ENCODE measurements at regions of chr3 and their contacts with region 1.

Region 1: DNA sequence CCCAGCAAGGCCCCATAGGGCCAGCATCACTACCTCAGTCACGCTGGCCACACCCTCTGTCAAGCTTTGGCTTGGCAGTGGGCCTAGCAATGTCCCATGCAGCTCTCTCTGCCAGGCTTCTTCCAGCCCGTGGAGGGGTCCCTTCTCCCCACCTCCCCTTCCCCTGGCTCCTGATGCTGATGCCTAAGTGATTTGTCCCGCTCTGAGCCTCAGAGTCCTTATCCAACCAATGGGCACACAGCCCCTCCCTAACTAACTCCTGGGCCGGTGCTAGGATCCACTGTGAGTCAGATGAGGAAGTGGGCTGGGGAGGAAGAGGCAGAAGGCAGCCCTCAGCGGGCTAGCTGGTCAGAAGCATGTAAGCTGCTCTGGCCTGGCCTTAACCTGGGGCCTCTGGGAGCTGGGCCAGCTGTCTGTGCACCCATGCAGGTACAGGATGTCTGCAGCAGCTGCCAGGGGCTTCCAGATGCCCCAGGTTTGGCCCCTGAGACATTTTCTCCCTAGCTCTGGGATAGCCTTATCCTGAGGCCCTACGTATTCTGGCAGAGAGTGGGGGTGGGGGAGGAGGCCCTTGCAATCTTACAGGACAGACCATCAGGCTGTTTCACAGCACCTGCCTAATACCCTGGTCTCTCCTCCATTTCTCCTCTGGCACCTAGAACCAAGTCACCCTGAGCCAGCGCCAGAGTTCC is 740 bp upstream of the ZBTB47 start:
- DNase-seq: peak; percentile 56 to 73
- ATAC-seq: peak; percentile 19 to 31 (median 27)
- H3K4me3 ChIP-seq: peak overlapping the region; percentile 78
- H3K27ac ChIP-seq: peak overlapping the region; percentile 98
- H3K4me1 ChIP-seq: peaks cover 43% of the 10 kb centered on the region
- H3K27me3 ChIP-seq: no peaks in the 10 kb centered on the region
- CTCF ChIP-seq: no peak

Region 2: DNA sequence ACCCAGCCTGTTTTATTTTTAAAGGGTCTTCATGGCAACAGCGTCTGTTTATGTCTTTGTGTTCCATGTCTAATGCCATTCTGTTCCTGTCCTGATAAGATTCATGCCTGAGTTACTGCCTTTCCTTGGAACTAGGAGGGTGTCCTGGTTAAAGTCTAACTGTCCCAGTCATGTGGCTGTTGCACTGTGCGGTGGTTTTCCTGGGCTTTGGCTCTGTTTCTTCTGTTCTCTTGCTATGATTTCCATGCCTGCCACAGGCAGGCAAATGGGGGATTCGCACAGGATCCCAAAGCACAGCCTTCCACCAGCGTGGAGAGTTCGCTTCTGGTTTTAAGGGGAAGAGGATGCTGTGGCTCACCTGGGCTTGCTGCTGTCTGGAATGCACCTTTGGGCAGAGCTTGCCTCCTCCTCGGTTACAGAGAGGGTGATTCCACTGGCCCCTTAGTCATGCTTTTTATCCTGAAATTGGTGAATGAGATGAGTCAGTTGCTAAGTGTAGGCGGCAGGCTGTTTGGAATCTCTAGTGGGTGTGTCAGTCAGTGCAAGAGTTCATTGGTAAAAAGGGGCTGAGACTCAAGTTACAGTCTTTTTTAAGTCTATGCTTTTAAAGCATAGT is 473.5 kb before region 1 on chr3:
- intact Hi-C with region 1: no loop called
- DNase-seq: peak; percentile 29 to 57
- ATAC-seq: peak; percentile 94 to 98 (median 96)
- H3K4me3 ChIP-seq: peak overlapping the region; percentile 6
- H3K27ac ChIP-seq: peak overlapping the region; percentile 71
- H3K4me1 ChIP-seq: peaks cover 64% of the 10 kb centered on the region
- H3K27me3 ChIP-seq: no peaks in the 10 kb centered on the region
- CTCF ChIP-seq: no peak

Region 3: DNA sequence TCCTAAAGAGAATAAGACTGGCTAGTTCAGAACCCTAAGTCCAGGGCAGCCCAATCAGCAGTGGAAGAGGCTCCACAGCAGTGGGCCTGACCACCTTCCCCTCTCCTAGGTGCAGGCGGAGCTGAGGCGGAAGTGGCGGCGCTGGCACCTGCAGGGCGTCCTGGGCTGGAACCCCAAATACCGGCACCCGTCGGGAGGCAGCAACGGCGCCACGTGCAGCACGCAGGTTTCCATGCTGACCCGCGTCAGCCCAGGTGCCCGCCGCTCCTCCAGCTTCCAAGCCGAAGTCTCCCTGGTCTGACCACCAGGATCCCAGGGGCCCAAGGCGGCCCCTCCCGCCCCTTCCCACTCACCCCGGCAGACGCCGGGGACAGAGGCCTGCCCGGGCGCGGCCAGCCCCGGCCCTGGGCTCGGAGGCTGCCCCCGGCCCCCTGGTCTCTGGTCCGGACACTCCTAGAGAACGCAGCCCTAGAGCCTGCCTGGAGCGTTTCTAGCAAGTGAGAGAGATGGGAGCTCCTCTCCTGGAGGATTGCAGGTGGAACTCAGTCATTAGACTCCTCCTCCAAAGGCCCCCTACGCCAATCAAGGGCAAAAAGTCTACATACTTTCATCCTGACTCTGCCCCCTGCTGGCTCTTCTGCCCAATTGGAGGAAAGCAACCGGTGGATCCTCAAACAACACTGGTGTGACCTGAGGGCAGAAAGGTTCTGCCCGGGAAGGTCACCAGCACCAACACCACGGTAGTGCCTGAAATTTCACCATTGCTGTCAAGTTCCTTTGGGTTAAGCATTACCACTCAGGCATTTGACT is 116.6 kb before region 1 on chr3:
- intact Hi-C with region 1: no loop called
- DNase-seq: no peak
- ATAC-seq: peak in 1 of 4 donors; percentile 37
- H3K4me3 ChIP-seq: no peak overlapping the region
- H3K27ac ChIP-seq: no peak overlapping the region
- H3K4me1 ChIP-seq: no peaks in the 10 kb centered on the region
- H3K27me3 ChIP-seq: no peaks in the 10 kb centered on the region
- CTCF ChIP-seq: no peak

Region 4: GRCh38 chr3:42547401-42547945 is 105.3 kb before region 1 on chr3:
- intact Hi-C with region 1: no loop called
- DNase-seq: peak; percentile 60 to 81
- ATAC-seq: peak; percentile 67 to 88 (median 79)
- H3K4me3 ChIP-seq: no peak overlapping the region
- H3K27ac ChIP-seq: no peak overlapping the region
- H3K4me1 ChIP-seq: no peaks in the 10 kb centered on the region
- H3K27me3 ChIP-seq: no peaks in the 10 kb centered on the region
- CTCF ChIP-seq: peak; percentile 97

Region 5: DNA sequence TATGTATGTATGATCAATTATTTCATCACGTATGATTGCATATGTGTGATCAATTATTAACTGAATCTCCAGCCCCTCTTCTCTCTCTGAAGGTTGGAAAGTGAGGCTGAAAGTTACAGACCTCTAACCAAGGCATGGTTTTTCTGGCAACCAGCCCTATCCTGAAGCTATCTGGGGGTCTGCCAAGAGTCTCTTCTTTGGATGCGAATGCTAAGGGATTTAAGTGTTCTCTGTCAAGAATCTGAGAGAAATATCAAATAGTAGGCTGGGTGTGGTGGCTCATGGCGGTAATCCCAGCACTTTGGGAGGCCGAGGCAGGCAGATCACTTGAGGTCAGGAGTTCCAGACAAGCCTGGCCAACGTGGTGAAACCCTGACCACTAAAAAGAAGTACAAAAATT is 44.2 kb before region 1 on chr3:
- intact Hi-C with region 1: loop called in 1 of 2 experiments (anchors 5 kb)
- DNase-seq: no peak
- ATAC-seq: peak in 1 of 4 donors; percentile 14
- H3K4me3 ChIP-seq: no peak overlapping the region
- H3K27ac ChIP-seq: peak overlapping the region; percentile 53
- H3K4me1 ChIP-seq: peaks cover 35% of the 10 kb centered on the region
- H3K27me3 ChIP-seq: no peaks in the 10 kb centered on the region
- CTCF ChIP-seq: no peak

Region 6: DNA sequence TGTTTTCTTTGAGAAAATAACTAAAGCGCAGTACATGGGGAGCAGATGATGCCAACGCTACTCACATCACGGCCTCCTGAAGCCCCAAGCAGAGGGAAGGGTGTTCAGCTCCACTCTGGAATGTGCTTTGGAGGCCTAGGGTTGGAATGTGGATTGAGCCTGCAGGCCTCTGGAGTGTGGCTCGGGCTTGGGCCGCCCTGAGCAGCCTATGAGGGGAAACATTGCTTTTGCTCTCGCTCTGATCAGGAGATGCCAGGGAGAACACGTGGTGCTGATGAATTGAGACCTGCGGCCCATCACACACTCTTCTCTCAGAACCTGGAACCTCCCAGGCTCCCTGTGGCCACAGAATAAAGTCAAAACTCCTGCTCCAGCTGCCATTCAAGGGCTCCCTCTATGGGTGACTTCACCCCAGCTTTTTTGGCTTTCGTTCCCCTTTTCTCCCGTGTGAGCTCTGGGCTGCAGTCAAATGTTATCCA is 97.0 kb after region 1 on chr3:
- intact Hi-C with region 1: loop called (anchors 2 to 10 kb)
- DNase-seq: no peak
- ATAC-seq: peak; percentile 53 to 76 (median 67)
- H3K4me3 ChIP-seq: no peak overlapping the region
- H3K27ac ChIP-seq: no peak overlapping the region
- H3K4me1 ChIP-seq: peaks cover 15% of the 10 kb centered on the region
- H3K27me3 ChIP-seq: no peaks in the 10 kb centered on the region
- CTCF ChIP-seq: peak; percentile 40